Endothelial cell of umbilical vein (primary cell): ENCODE measurements at regions of chr14 and their contacts with region 1.

Region 1: DNA sequence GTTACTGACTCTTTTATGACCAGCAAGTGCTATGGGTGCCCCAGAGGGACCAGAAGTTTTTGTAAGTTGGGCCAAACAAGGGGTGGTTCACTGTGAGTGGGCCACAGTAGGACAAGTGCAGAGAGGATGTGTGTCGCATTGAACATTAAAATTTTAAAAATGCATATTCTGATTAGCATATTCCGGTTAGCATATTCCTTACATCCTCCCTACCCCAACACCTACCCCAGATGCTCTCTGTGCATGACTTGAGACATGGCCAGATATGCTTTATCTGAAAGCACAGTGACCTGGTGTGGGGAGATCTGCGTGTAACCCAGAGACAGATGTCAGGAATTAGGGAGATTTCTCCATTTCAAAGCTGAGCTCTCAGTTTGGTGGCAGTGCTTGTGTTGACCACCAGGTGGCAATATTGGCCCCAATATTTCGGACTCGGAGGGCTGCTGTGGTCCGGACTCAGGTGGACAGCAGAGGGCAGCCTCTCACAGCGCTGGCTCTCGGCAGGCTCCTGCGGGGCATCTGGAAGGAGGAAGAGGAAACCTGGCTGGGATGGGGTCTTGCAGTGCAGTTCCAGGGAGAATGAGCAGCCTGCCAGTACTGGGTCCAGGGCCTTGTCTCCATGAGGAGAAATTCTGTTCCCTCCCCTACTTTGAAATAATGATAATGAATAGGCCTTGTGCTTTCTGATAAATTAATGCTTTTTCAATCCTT is 1.6 kb upstream of the CEBPE start:
- DNase-seq: peak; percentile 89
- H3K4me3 ChIP-seq: no peak overlapping the region
- H3K27ac ChIP-seq: peak overlapping the region; percentile 81
- H3K4me1 ChIP-seq: peaks cover 21% of the 10 kb centered on the region
- H3K27me3 ChIP-seq: no peaks in the 10 kb centered on the region
- CTCF ChIP-seq: peak; percentile 100
- POLR2A ChIP-seq: no peak

Region 2: DNA sequence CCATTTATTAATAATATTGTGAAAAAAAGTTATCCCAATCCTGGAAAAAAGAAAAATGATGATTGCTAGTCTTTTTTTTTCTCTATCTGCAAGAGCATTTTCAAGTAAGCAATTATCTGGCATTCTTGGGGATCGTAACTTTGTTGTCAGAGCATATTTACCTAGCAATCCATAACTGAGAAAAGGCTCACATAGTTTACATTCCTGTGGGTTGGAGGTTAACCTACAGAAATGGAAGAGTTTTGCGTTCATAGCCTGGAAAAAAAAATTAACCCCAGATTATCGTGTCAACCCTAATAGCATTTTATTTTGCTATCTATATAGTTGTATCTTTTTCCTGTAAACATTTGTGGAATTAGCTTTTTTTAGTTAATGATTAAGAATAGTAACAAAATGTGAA is 824.0 kb before region 1 on chr14:
- CTCF ChIA-PET with region 1: no interaction called
- POLR2A ChIA-PET with region 1: no interaction called
- dilution Hi-C with region 1: no loop called
- intact Hi-C with region 1: no loop called
- DNase-seq: no peak
- H3K4me3 ChIP-seq: no peak overlapping the region
- H3K27ac ChIP-seq: no peak overlapping the region
- H3K4me1 ChIP-seq: peaks cover 6% of the 10 kb centered on the region
- H3K27me3 ChIP-seq: peaks cover 16 to 18% of the 10 kb centered on the region in 2 experiments
- CTCF ChIP-seq: no peak
- POLR2A ChIP-seq: no peak

Region 3: GRCh38 chr14:23095196-23096108 is 25.2 kb before region 1 on chr14 and contains the start of gene C14orf119:
- CTCF ChIA-PET with region 1: interaction called, 30 read pairs
- POLR2A ChIA-PET with region 1: interaction called, 8 read pairs
- dilution Hi-C with region 1: no loop called
- intact Hi-C with region 1: no loop called
- DNase-seq: peak; percentile 100
- H3K4me3 ChIP-seq: peak within 1 kb of the TSS; percentile 87 to 99 (median 94)
- H3K27ac ChIP-seq: peak within 1 kb of the TSS; percentile 89
- H3K4me1 ChIP-seq: peaks cover 28% of the 10 kb centered on the region
- H3K27me3 ChIP-seq: no peaks in the 10 kb centered on the region
- CTCF ChIP-seq: no peak
- POLR2A ChIP-seq: peak; percentile 66
- total RNA-seq, gene C14orf119: 55.5 and 58.3 TPM in 2 replicates

Region 4: GRCh38 chr14:23147676-23148075 is 27.0 kb after region 1 on chr14:
- CTCF ChIA-PET with region 1: interaction called, 43 read pairs
- POLR2A ChIA-PET with region 1: interaction called, 11 read pairs
- dilution Hi-C with region 1: no loop called
- intact Hi-C with region 1: no loop called
- DNase-seq: peak; percentile 39
- H3K4me3 ChIP-seq: no peak overlapping the region
- H3K27ac ChIP-seq: no peak overlapping the region
- H3K4me1 ChIP-seq: no peaks in the 10 kb centered on the region
- H3K27me3 ChIP-seq: no peaks in the 10 kb centered on the region
- CTCF ChIP-seq: no peak
- POLR2A ChIP-seq: no peak

Region 5: DNA sequence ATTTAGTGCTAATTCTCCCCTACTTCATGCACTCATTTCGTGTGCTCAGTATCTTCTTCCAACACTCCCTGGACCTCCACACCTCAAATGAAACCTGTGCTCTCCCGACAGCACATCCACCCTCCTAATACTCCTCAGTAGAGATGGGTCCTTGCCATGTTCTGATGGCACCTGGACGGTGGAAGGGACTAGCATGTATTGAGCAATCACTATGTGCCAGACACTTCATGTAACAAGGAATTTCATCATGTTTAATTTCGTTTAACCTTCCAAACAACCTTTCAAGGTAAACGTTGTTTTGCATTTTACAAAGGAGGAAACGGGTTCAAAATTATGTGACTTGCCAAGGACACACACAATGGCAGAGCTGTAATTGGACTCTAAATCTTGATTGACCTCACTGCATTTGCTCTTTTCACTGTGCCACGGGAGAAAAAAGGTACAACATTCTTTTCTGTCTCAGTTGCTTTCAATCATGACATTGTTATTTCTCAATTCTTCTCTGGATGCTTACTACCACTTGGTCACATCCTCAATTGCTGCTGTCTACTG is 74.9 kb after region 1 on chr14:
- CTCF ChIA-PET with region 1: interaction called, 1,289 read pairs
- POLR2A ChIA-PET with region 1: interaction called, 3 read pairs
- dilution Hi-C with region 1: no loop called
- intact Hi-C with region 1: no loop called
- DNase-seq: no peak
- H3K4me3 ChIP-seq: no peak overlapping the region
- H3K27ac ChIP-seq: no peak overlapping the region
- H3K4me1 ChIP-seq: no peaks in the 10 kb centered on the region
- H3K27me3 ChIP-seq: peaks cover 2 to 10% of the 10 kb centered on the region in 2 experiments
- CTCF ChIP-seq: no peak
- POLR2A ChIP-seq: no peak

Region 6: GRCh38 chr14:23258256-23258655 is 137.6 kb after region 1 on chr14:
- CTCF ChIA-PET with region 1: interaction called, 29 read pairs
- POLR2A ChIA-PET with region 1: no interaction called
- dilution Hi-C with region 1: no loop called
- intact Hi-C with region 1: no loop called
- DNase-seq: no peak
- H3K4me3 ChIP-seq: no peak overlapping the region
- H3K27ac ChIP-seq: no peak overlapping the region
- H3K4me1 ChIP-seq: no peaks in the 10 kb centered on the region
- H3K27me3 ChIP-seq: peaks cover 19 to 26% of the 10 kb centered on the region in 2 experiments
- CTCF ChIP-seq: no peak
- POLR2A ChIP-seq: no peak

Region 7: DNA sequence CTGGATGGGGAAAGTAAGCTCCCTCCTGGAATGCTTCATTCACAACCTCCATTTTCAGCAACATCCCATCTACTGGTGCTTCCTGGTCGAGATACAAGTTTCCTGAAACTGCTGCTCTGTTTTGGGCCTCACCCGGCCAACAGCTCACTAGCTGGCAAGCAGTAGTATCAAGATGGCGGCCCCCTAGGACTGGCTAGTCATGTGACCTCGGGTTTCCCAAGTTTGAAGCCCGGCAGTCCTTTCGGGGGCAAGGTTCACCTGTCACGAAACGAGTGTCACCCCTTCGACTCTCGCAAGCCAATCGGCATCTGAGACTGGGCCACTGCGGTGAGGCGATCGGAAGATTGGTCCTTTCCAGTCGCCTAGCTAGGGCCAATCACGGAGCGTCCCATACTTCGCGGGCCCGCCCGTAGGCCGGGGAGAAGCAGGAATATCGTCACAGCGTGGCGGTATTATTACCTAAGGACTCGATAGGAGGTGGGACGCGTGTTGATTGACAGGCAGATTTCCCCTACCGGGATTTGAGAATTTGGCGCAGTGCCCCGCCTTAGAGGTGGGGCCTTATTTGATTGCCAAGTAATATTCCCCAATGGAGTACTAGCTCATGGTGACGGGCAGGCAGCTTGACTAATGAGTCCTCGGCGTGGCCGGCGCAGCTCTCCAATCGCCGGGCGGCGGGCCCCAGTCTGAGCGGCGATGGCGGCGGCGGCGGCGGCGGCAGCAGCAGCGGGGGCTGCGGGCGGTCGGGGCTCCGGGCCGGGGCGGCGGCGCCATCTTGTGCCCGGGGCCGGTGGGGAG is 200.3 kb after region 1 on chr14 and contains the start of gene PABPN1:
- CTCF ChIA-PET with region 1: interaction called, 20 read pairs
- POLR2A ChIA-PET with region 1: no interaction called
- dilution Hi-C with region 1: no loop called
- intact Hi-C with region 1: no loop called
- DNase-seq: peak; percentile 100
- H3K4me3 ChIP-seq: peak within 1 kb of the TSS; percentile 90 to 97 (median 95)
- H3K27ac ChIP-seq: peak within 1 kb of the TSS; percentile 77
- H3K4me1 ChIP-seq: peaks cover 16% of the 10 kb centered on the region
- H3K27me3 ChIP-seq: no peaks in the 10 kb centered on the region
- CTCF ChIP-seq: no peak
- POLR2A ChIP-seq: no peak
- total RNA-seq, gene PABPN1: 218 and 231 TPM in 2 replicates